ENCODE measurements at regions of chr4 and their contacts with region 1.

Region 1: GRCh38 chr4:130563185-130563888 is 1467.4 kb downstream of the C4orf33 start:
- DNase-seq: peak; percentile 51 to 54
- H3K4me3 ChIP-seq: no peak overlapping the region
- H3K4me3 Mint-ChIP-seq: peak overlapping the region; percentile 57
- H3K27ac Mint-ChIP-seq: no peak overlapping the region
- H3K4me1 ChIP-seq: peaks cover 13% of the 10 kb centered on the region
- H3K4me1 Mint-ChIP-seq: peaks cover 19% of the 10 kb centered on the region
- H3K27me3 ChIP-seq: no peaks in the 10 kb centered on the region
- H3K27me3 Mint-ChIP-seq: peaks cover 2% of the 10 kb centered on the region
- CTCF ChIP-seq: peak; percentile 49 to 64

Region 2: GRCh38 chr4:130689181-130689580 is 125.8 kb after region 1 on chr4:
- CTCF ChIA-PET with region 1: no interaction called
- POLR2A ChIA-PET with region 1: no interaction called
- intact Hi-C with region 1: loop called (anchors 10 kb)
- DNase-seq: no peak
- H3K4me3 ChIP-seq: no peak overlapping the region
- H3K4me3 Mint-ChIP-seq: no peak overlapping the region
- H3K27ac Mint-ChIP-seq: no peak overlapping the region
- H3K4me1 ChIP-seq: no peaks in the 10 kb centered on the region
- H3K4me1 Mint-ChIP-seq: no peaks in the 10 kb centered on the region
- H3K27me3 ChIP-seq: no peaks in the 10 kb centered on the region
- H3K27me3 Mint-ChIP-seq: no peaks in the 10 kb centered on the region
- CTCF ChIP-seq: no peak

Region 3: DNA sequence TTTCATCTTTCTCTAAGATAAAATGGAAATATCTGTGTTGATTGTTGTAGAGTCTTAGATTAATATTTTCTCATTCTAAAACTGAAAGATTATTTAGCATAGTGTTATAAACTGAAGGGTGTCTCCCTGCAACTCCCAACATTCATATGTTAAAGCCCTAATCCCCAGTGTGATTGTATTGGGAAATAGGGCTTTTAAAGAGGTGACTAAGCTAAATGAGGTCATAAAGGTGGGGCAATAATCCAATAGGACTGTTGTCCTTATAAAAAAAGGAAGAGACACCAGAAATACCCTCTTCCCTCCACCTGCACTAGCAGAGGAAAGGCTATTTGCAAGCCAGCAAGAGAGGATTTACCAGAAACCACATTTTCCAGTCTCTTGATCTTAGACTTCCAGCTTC is 159.0 kb after region 1 on chr4:
- CTCF ChIA-PET with region 1: no interaction called
- POLR2A ChIA-PET with region 1: no interaction called
- intact Hi-C with region 1: no loop called
- DNase-seq: no peak
- H3K4me3 ChIP-seq: no peak overlapping the region
- H3K4me3 Mint-ChIP-seq: no peak overlapping the region
- H3K27ac Mint-ChIP-seq: no peak overlapping the region
- H3K4me1 ChIP-seq: no peaks in the 10 kb centered on the region
- H3K4me1 Mint-ChIP-seq: no peaks in the 10 kb centered on the region
- H3K27me3 ChIP-seq: no peaks in the 10 kb centered on the region
- H3K27me3 Mint-ChIP-seq: no peaks in the 10 kb centered on the region
- CTCF ChIP-seq: no peak

Region 4: DNA sequence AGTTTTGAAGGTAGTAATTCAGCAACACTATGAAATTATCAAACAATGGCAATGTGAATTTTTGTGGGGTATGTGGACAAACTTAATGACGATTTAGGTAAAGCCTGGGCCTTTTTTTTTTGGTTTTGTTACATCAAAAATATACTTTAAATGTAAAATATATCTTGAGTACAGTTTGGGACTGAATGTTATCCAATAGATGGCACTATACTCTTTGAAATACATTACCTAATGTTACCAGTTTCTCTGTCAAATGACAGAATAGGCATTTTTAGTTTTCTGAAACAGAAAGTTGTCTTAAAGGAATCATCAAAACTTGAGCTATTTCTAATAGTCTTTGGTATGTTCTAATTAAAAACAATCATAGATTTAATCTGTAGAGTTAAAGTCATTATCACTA is 184.5 kb after region 1 on chr4:
- CTCF ChIA-PET with region 1: no interaction called
- POLR2A ChIA-PET with region 1: no interaction called
- intact Hi-C with region 1: loop called (anchors 10 kb)
- DNase-seq: no peak
- H3K4me3 ChIP-seq: no peak overlapping the region
- H3K4me3 Mint-ChIP-seq: no peak overlapping the region
- H3K27ac Mint-ChIP-seq: no peak overlapping the region
- H3K4me1 ChIP-seq: no peaks in the 10 kb centered on the region
- H3K4me1 Mint-ChIP-seq: no peaks in the 10 kb centered on the region
- H3K27me3 ChIP-seq: no peaks in the 10 kb centered on the region
- H3K27me3 Mint-ChIP-seq: no peaks in the 10 kb centered on the region
- CTCF ChIP-seq: peak in 1 of 2 experiments; percentile 9

Region 5: DNA sequence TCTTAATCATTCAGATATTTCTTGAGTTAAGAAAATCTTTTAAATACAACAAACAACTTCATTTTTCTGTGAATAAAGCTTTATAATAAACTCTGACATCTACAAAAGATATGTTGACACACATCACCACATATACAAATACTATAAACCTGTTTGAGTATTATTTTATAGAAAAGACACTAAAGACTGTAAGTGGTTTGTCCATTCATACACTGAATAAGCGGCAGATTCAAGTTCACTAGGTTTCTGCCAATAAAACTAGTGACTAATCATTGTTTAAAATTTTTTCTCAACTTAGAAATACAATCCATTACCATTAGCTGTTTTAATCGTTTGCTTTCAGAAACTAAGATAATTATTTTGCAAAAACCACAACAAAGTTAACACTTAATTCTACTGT is 432.7 kb after region 1 on chr4:
- CTCF ChIA-PET with region 1: no interaction called
- POLR2A ChIA-PET with region 1: no interaction called
- intact Hi-C with region 1: no loop called
- DNase-seq: no peak
- H3K4me3 ChIP-seq: no peak overlapping the region
- H3K4me3 Mint-ChIP-seq: no peak overlapping the region
- H3K27ac Mint-ChIP-seq: no peak overlapping the region
- H3K4me1 ChIP-seq: no peaks in the 10 kb centered on the region
- H3K4me1 Mint-ChIP-seq: no peaks in the 10 kb centered on the region
- H3K27me3 ChIP-seq: no peaks in the 10 kb centered on the region
- H3K27me3 Mint-ChIP-seq: no peaks in the 10 kb centered on the region
- CTCF ChIP-seq: no peak

Measured in Caco-2 (cell line).